Naive thymus-derived CD4-positive, alpha-beta T cell (primary cell): ENCODE measurements at regions of chr22 and their contacts with region 1.

Region 1: DNA sequence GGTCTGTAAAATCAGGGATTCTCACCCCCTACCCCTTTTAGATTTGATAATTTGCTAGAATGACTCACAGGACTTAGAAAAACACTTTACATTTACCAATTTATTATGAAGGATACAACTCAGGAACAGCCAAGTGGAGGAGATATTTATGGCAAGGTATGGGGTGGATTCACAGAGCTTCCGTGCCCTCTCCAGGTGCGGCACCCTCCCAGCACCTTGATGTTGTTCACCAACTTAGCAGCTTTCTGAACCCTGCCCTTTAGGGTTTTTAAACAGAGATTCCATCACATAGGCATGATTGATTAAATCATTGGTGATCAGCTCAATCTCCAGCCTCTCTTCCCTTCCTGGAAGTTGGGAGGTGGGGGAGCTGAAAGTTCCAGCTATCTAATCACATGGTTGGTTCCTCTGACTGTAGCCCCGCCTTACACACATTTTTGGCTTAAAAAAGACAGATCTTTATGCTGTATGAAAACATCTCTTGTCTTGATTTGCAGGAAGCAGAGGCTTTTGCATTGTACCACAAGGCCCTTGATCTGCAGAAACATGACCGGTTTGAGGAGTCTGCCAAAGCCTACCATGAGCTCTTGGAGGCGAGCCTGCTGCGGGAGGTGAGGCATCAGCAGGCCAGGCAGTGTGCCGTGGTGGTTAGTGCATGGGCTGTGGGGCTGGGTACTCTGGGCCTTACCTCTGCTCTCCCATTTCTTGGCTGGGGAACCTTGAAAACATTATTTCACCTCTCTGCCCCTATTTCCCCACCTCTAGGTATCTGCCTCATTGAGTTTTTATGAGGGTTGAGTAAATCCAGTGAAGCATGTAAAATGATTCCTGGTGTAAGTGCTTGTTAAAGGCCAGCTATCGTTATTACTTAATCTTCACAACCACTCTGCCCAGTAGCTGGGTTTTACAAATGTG is 27.0 kb downstream of the CABIN1 start:
- DNase-seq: peak in 7 of 9 donors; percentile 44 to 80 (median 73)
- ATAC-seq: peak; percentile 89
- H3K4me3 ChIP-seq: no peak overlapping the region
- H3K4me3 Mint-ChIP-seq: peak overlapping the region in 9 of 10 donors; percentile 61 to 83 (median 80)
- H3K27ac ChIP-seq: peak overlapping the region; percentile 62
- H3K27ac Mint-ChIP-seq: peak overlapping the region; percentile 77 to 97 (median 92)
- H3K4me1 ChIP-seq: peaks cover 0 to 36% of the 10 kb centered on the region in 2 donors
- H3K4me1 Mint-ChIP-seq: peaks cover 25 to 86% (median 76%) of the 10 kb centered on the region in 7 donors
- H3K27me3 ChIP-seq: no peaks in the 10 kb centered on the region
- H3K27me3 Mint-ChIP-seq: no peaks in the 10 kb centered on the region

Region 2: DNA sequence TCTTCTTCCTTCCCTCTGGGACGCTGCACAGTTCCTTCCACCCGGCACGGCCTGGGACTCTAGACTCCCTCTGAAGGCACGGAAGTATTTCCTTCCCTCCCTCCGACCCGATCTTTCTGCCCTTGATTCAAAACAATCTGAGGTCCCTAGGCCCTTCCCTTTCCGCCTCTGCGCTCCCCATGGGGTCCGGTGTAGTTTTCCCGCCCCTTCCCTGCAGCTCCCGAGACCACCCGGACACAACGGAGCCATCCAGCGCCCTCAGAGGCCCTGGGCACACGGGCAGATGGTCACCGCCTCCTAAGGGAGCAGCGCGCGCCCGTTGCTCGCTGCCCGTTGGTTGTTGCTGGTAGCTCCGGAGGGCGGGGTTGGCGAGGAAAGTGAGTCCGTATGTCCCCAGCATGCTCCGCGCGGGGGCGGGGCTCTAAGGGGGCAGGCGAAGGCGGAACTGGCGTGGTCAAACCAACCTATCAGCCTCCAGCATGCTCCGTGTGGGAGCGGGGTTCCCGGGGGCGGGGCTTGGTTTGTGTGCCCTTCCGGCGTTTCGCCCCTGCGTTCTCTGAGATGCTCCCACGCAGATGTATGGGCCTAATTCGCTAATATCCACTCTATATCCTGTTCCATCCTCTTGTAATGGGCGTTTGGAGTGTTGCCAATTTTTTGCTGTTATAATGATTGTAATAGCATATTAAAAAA is 124.3 kb before region 1 on chr22:
- CTCF ChIA-PET with region 1: no interaction called
- POLR2A ChIA-PET with region 1: interaction called, 4 read pairs
- intact Hi-C with region 1: loop called in 1 of 2 experiments (anchors 1 kb)
- DNase-seq: peak; percentile 94 to 100 (median 97)
- ATAC-seq: peak; percentile 100
- H3K4me3 ChIP-seq: peak overlapping the region; percentile 83
- H3K4me3 Mint-ChIP-seq: peak overlapping the region; percentile 84 to 97 (median 93)
- H3K27ac ChIP-seq: peak overlapping the region; percentile 78
- H3K27ac Mint-ChIP-seq: peak overlapping the region; percentile 89 to 99 (median 98)
- H3K4me1 ChIP-seq: peaks cover 0 to 7% of the 10 kb centered on the region in 2 donors
- H3K4me1 Mint-ChIP-seq: peaks cover 7 to 34% (median 16%) of the 10 kb centered on the region in 7 donors
- H3K27me3 ChIP-seq: no peaks in the 10 kb centered on the region
- H3K27me3 Mint-ChIP-seq: peaks cover 0 to under 1% (median 0%) of the 10 kb centered on the region in 5 donors

Region 3: GRCh38 chr22:24011735-24012068 is 26.4 kb before region 1 on chr22:
- CTCF ChIA-PET with region 1: interaction called, 7 read pairs
- POLR2A ChIA-PET with region 1: interaction called, 60 read pairs
- intact Hi-C with region 1: loop called in 1 of 2 experiments (anchors 1 kb)
- DNase-seq: peak in 2 of 9 donors; percentile 10 to 19
- ATAC-seq: no peak
- H3K4me3 ChIP-seq: peak overlapping the region; percentile 75
- H3K4me3 Mint-ChIP-seq: peak overlapping the region; percentile 88 to 98 (median 96)
- H3K27ac ChIP-seq: peak overlapping the region; percentile 78
- H3K27ac Mint-ChIP-seq: peak overlapping the region; percentile 93 to 99 (median 97)
- H3K4me1 ChIP-seq: peaks cover 4 to 10% of the 10 kb centered on the region in 2 donors
- H3K4me1 Mint-ChIP-seq: peaks cover 12 to 52% (median 39%) of the 10 kb centered on the region in 7 donors
- H3K27me3 ChIP-seq: no peaks in the 10 kb centered on the region
- H3K27me3 Mint-ChIP-seq: no peaks in the 10 kb centered on the region

Region 4: DNA sequence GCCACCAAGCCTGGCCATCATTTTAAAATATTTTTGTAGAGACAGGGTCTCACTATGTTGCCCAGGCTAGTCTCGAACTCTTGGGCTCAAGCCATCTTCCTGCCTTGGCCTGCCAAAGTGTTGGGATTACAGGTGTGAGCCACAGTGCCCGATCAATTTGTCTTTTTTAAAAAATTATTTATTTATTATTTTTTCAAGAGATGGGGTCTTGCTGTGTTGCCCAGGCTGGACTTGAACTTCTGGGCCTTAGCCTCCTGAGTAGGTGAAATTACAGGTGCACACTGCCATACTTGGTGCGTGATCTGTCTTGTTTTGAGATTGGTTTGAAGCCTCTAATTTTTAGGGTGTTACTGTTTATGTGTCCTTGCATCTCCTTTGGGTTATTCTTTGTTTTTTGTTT is 16.8 kb before region 1 on chr22:
- CTCF ChIA-PET with region 1: no interaction called
- POLR2A ChIA-PET with region 1: interaction called, 5 read pairs
- intact Hi-C with region 1: loop called in 1 of 2 experiments (anchors 2 kb)
- DNase-seq: no peak
- ATAC-seq: no peak
- H3K4me3 ChIP-seq: no peak overlapping the region
- H3K4me3 Mint-ChIP-seq: no peak overlapping the region
- H3K27ac ChIP-seq: no peak overlapping the region
- H3K27ac Mint-ChIP-seq: no peak overlapping the region
- H3K4me1 ChIP-seq: peaks cover 4 to 5% of the 10 kb centered on the region in 2 donors
- H3K4me1 Mint-ChIP-seq: peaks cover 16 to 61% (median 43%) of the 10 kb centered on the region in 7 donors
- H3K27me3 ChIP-seq: no peaks in the 10 kb centered on the region
- H3K27me3 Mint-ChIP-seq: no peaks in the 10 kb centered on the region

Region 5: DNA sequence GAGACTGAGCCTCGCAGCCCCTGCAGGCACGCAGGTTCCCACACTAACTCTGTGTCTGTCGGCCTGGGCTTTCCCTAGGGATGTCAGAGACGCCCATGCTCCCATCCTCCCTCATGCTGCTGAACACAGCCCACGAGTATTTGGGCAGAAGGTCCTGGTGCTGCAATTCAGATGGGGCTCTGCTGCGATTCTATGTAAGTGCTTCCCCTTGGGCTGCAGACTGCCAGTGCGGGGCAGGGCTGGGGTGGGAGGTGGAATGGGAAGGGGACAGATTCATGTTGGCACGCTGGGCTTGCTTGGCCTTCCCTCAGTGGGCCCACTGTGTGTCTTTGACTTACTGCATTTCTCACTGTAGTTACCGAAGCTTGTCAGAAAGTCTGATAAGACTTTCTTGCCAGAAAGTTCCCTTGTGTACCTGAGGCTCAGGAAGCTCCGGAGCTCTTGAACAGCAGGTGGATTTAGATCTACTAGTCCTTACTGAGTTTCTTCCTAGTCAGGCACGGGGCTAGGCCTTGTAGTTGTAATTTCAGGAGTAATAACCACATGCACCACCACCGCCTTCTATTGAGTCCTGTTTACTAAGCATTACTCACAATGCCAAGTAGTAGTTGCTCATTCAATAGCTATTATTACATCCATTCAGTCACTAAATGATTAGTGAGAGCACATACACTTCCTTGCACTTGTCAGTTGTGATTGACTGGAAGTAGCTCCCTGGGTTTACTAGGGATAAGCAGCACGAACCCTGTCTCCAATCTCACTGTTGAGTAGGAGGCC is 38.2 kb after region 1 on chr22:
- CTCF ChIA-PET with region 1: no interaction called
- POLR2A ChIA-PET with region 1: no interaction called
- intact Hi-C with region 1: no loop called
- DNase-seq: no peak
- ATAC-seq: no peak
- H3K4me3 ChIP-seq: no peak overlapping the region
- H3K4me3 Mint-ChIP-seq: no peak overlapping the region
- H3K27ac ChIP-seq: no peak overlapping the region
- H3K27ac Mint-ChIP-seq: peak overlapping the region in 2 of 9 donors; percentile 5 to 46
- H3K4me1 ChIP-seq: no peaks in the 10 kb centered on the region
- H3K4me1 Mint-ChIP-seq: peaks cover 0 to 8% (median 0%) of the 10 kb centered on the region in 7 donors
- H3K27me3 ChIP-seq: no peaks in the 10 kb centered on the region
- H3K27me3 Mint-ChIP-seq: no peaks in the 10 kb centered on the region

Region 6: DNA sequence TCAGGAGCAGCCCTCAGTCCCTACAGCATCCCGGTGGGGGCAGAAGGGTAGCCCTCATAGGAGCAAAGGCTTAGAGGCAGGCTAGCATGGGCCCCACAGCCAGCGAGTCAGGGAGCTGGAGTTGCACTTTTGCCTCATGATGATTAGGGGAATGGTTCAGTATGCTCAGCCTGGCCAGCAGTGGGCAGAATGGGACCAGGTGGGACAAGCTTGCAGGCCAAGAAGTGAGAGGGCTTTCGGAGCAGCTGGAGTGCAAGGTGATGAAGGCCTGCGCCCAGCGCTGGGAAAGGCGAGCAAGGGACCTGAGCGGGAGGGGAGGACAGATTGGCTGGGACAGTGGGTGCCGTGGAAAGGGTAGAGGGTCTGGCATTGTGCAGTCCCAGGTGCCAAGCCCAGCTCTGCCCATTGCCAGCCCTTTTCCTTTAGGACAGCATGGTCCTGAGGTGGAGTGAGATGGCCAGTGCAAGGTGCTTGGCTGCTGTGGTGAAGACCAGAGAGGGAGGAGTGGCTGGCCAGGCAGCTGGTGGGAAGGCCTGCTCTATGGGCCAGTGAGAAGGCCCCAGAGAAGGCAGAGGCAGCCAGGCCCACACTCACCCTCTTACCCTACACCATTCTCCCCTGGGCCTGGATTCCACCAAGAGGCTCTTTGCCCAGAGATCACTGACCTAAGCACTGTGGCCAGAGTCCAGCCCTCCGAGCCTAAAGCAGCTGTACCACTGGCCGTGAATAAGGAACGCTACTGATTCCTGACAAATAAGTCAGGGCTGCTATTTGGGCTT is 95.3 kb after region 1 on chr22:
- CTCF ChIA-PET with region 1: no interaction called
- POLR2A ChIA-PET with region 1: no interaction called
- intact Hi-C with region 1: no loop called
- DNase-seq: peak in 7 of 9 donors; percentile 43 to 65 (median 57)
- ATAC-seq: peak; percentile 62
- H3K4me3 ChIP-seq: no peak overlapping the region
- H3K4me3 Mint-ChIP-seq: peak overlapping the region in 8 of 10 donors; percentile 2 to 79 (median 60)
- H3K27ac ChIP-seq: peak overlapping the region; percentile 62
- H3K27ac Mint-ChIP-seq: peak overlapping the region; percentile 56 to 95 (median 89)
- H3K4me1 ChIP-seq: peaks cover 6 to 18% of the 10 kb centered on the region in 2 donors
- H3K4me1 Mint-ChIP-seq: peaks cover 18 to 33% (median 29%) of the 10 kb centered on the region in 7 donors
- H3K27me3 ChIP-seq: no peaks in the 10 kb centered on the region
- H3K27me3 Mint-ChIP-seq: no peaks in the 10 kb centered on the region